ENCODE measurements at regions of chr10 and their contacts with region 1.

Region 1: GRCh38 chr10:95693668-95694534 is at the start of gene TCTN3:
- DNase-seq: peak; percentile 87
- ATAC-seq: peak; percentile 94
- H3K4me3 Mint-ChIP-seq: peak within 1 kb of the TSS; percentile 98
- H3K27ac Mint-ChIP-seq: peak within 1 kb of the TSS; percentile 94
- H3K4me1 Mint-ChIP-seq: peaks cover 77% of the 10 kb centered on the region
- H3K27me3 Mint-ChIP-seq: no peaks in the 10 kb centered on the region
- CTCF ChIP-seq: peak; percentile 70
- total RNA-seq, gene TCTN3: 44.5 and 47.5 TPM in 2 replicates

Region 2: GRCh38 chr10:95741807-95742467 is 48.0 kb after region 1 on chr10:
- CTCF ChIA-PET with region 1: interaction called, 41 read pairs
- POLR2A ChIA-PET with region 1: interaction called, 28 read pairs
- intact Hi-C with region 1: loop called (anchors 1 kb)
- DNase-seq: no peak
- ATAC-seq: peak; percentile 83
- H3K4me3 Mint-ChIP-seq: peak overlapping the region; percentile 85
- H3K27ac Mint-ChIP-seq: peak overlapping the region; percentile 99
- H3K4me1 Mint-ChIP-seq: peaks cover 55% of the 10 kb centered on the region
- H3K27me3 Mint-ChIP-seq: no peaks in the 10 kb centered on the region
- CTCF ChIP-seq: no peak

Region 3: GRCh38 chr10:95792874-95793285 is 99.0 kb after region 1 on chr10:
- CTCF ChIA-PET with region 1: interaction called, 18 read pairs
- POLR2A ChIA-PET with region 1: interaction called, 8 read pairs
- intact Hi-C with region 1: loop called (anchors 1 kb)
- DNase-seq: no peak
- ATAC-seq: peak; percentile 15
- H3K4me3 Mint-ChIP-seq: peak overlapping the region; percentile 32
- H3K27ac Mint-ChIP-seq: peak overlapping the region; percentile 94
- H3K4me1 Mint-ChIP-seq: peaks cover 94% of the 10 kb centered on the region
- H3K27me3 Mint-ChIP-seq: no peaks in the 10 kb centered on the region
- CTCF ChIP-seq: no peak

Region 4: GRCh38 chr10:95820363-95820762 is 126.5 kb after region 1 on chr10:
- CTCF ChIA-PET with region 1: interaction called, 38 read pairs
- POLR2A ChIA-PET with region 1: interaction called, 24 read pairs
- intact Hi-C with region 1: loop called (anchors 1 kb)
- DNase-seq: no peak
- ATAC-seq: peak; percentile 78
- H3K4me3 Mint-ChIP-seq: peak overlapping the region; percentile 72
- H3K27ac Mint-ChIP-seq: peak overlapping the region; percentile 93
- H3K4me1 Mint-ChIP-seq: peaks cover 80% of the 10 kb centered on the region
- H3K27me3 Mint-ChIP-seq: no peaks in the 10 kb centered on the region
- CTCF ChIP-seq: no peak

Region 5: DNA sequence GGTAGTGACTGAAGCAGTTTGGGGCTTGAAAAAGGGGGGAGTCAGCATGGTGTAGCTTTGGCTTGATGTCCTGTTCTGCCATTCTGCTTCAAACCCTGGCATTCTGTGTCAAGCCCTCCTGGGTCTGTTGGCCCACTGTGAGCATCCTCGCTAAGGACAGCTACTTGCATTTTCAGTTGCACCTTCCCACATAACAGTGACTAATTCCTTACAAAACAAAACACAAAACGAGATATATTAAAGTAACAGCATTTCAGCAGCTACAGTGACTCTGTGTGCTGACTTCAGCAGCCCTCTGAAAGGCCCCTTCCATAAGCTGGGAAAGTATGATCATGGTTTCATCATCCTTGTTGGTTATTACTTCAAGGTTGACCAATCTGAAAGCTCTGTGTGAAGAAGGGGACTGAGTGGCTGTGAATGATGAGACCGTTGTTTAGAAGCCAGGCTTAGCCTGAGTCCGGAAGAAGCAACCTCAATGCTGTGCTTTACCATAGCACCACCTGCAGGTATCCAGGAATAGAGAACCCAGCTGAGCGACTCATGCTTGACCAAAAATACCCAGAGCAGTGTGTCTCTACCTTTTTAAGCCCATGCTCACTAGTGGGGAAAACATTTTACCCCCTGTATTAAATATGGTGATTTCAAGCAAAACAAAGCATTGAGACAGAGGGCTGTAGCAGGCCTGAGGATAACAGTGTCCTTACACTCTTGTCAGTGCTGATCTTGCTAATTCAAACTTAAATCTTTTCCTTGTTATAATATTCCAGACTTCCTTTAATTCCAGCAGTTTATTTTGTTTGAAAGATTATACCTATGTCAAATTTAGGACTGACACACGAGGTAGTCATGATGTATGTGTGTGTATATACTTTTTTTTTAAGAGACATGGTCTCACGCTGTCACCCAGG is 171.3 kb after region 1 on chr10:
- CTCF ChIA-PET with region 1: interaction called, 171 read pairs
- POLR2A ChIA-PET with region 1: interaction called, 64 read pairs
- intact Hi-C with region 1: loop called (anchors 1 kb)
- DNase-seq: no peak
- ATAC-seq: peak; percentile 98
- H3K4me3 Mint-ChIP-seq: no peak overlapping the region
- H3K27ac Mint-ChIP-seq: peak overlapping the region; percentile 89
- H3K4me1 Mint-ChIP-seq: peaks cover 25% of the 10 kb centered on the region
- H3K27me3 Mint-ChIP-seq: no peaks in the 10 kb centered on the region
- CTCF ChIP-seq: no peak

Region 6: DNA sequence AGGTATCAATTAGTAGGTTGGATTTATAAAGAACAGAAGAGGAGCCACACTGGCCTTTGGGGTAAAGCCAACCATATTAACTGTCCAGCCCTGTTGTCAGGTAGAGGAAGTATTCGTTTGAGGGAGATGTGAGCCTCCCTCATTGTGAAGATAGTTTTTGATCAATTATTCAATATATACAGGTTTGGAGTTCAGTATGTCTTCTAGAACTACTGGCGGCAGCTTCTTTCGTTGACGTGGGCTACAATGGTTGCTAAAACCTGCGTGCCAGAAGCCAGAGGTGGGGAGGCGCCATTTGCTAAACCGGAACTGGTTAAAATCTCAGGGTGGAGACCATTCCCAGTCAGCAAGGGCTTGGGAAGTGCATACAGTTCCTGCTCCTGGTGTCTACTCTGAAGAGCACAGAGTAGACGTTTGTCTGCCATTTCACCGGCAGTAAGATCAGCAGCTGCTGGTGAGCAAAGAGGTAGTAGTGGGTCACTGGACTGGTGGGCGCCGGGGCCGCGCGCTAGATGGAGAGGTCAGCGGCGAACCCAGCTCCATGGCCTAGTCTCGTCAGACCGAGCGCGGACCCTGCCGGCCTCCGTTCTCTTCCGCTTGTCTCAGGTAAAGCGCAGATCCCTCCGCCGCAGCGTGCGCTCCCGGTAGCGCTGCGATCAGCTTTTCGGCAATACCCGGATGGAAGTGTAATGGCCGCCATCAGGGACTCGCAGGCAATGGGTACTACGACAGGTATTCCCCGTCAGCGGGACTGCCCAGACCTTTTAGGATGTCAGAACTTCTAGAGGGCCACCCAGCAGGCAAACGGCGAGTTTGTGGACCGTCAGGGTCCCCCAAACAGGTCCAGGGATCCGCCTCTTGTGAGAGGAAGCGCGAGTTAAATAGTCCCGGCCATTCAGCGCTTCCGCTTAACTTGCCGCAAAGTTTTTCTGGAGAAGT is 435.8 kb after region 1 on chr10 and contains the start of gene ZNF518A:
- CTCF ChIA-PET with region 1: no interaction called
- POLR2A ChIA-PET with region 1: interaction called, 12 read pairs
- intact Hi-C with region 1: loop called (anchors 10 kb)
- DNase-seq: peak; percentile 87
- ATAC-seq: peak; percentile 86
- H3K4me3 Mint-ChIP-seq: peak within 1 kb of the TSS; percentile 97
- H3K27ac Mint-ChIP-seq: peak within 1 kb of the TSS; percentile 100
- H3K4me1 Mint-ChIP-seq: peaks cover 21% of the 10 kb centered on the region
- H3K27me3 Mint-ChIP-seq: peaks cover 24% of the 10 kb centered on the region
- CTCF ChIP-seq: no peak
- total RNA-seq, gene ZNF518A: 23.8 and 28.7 TPM in 2 replicates